Heart right ventricle (tissue), 16 donors: ENCODE measurements at regions of chr19 and their contacts with region 1.

Region 1: GRCh38 chr19:13880059-13881043 is 3.4 kb downstream of the NANOS3 start:
- DNase-seq: peak; percentile 97 to 99
- ATAC-seq: peak; percentile 95 to 97 (median 97)
- H3K4me3 ChIP-seq: peak overlapping the region in 7 of 10 donors; percentile 22 to 37 (median 29)
- H3K27ac ChIP-seq: peak overlapping the region in 9 of 10 donors; percentile 5 to 87 (median 70)
- H3K4me1 ChIP-seq: peaks cover 0 to 36% (median 28%) of the 10 kb centered on the region in 9 donors
- H3K27me3 ChIP-seq: no peaks in the 10 kb centered on the region
- CTCF ChIP-seq: peak in 8 of 9 donors; percentile 99 to 100 (median 99)

Region 2: GRCh38 chr19:14031719-14032480 is 151.5 kb after region 1 on chr19 and contains the start of gene IL27RA:
- intact Hi-C with region 1: loop called in 2 of 10 experiments (anchors 5 to 10 kb)
- DNase-seq: peak; percentile 72 to 75
- ATAC-seq: peak; percentile 80 to 90 (median 86)
- H3K4me3 ChIP-seq: peak within 1 kb of the TSS; percentile 61 to 80 (median 74)
- H3K27ac ChIP-seq: peak within 1 kb of the TSS; percentile 79 to 96 (median 92)
- H3K4me1 ChIP-seq: peaks cover 0 to 33% (median 18%) of the 10 kb centered on the region in 9 donors
- H3K27me3 ChIP-seq: peaks cover 0 to 5% (median 0%) of the 10 kb centered on the region in 7 donors
- CTCF ChIP-seq: peak; percentile 55 to 78 (median 64)
- total RNA-seq, gene IL27RA: 2.4 to 7.6 (median 3.4) TPM

Region 3: GRCh38 chr19:14054721-14055120 is 174.4 kb after region 1 on chr19:
- intact Hi-C with region 1: loop called in 2 of 10 experiments (anchors 5 to 10 kb)
- DNase-seq: no peak
- ATAC-seq: peak in 1 of 8 donors; percentile 10
- H3K4me3 ChIP-seq: no peak overlapping the region
- H3K27ac ChIP-seq: no peak overlapping the region
- H3K4me1 ChIP-seq: peaks cover 0 to 17% (median 5%) of the 10 kb centered on the region in 9 donors
- H3K27me3 ChIP-seq: peaks cover 0 to 34% (median 22%) of the 10 kb centered on the region in 7 donors
- CTCF ChIP-seq: no peak

Region 4: GRCh38 chr19:14136509-14137281 is 256.3 kb after region 1 on chr19 and contains the start of gene ASF1B:
- intact Hi-C with region 1: loop called in 2 of 10 experiments (anchors 5 to 10 kb)
- DNase-seq: peak; percentile 99
- ATAC-seq: peak; percentile 93 to 96 (median 95)
- H3K4me3 ChIP-seq: peak within 1 kb of the TSS; percentile 56 to 91 (median 74)
- H3K27ac ChIP-seq: peak within 1 kb of the TSS; percentile 83 to 97 (median 92)
- H3K4me1 ChIP-seq: peaks cover 3 to 49% (median 31%) of the 10 kb centered on the region in 9 donors
- H3K27me3 ChIP-seq: no peaks in the 10 kb centered on the region
- CTCF ChIP-seq: peak; percentile 60 to 98 (median 91)
- total RNA-seq, gene ASF1B: 0.17 to 5.6 (median 0.63) TPM